ENCODE measurements at regions of chr7 and their contacts with region 1.

Region 1: GRCh38 chr7:76047811-76048667 is at the starts of genes MDH2 and STYXL1:
- DNase-seq: peak; percentile 99
- H3K4me3 ChIP-seq: peak within 1 kb of the TSS; percentile 73 to 97
- H3K27ac ChIP-seq: peak within 1 kb of the TSS; percentile 81 to 86
- H3K4me1 ChIP-seq: peaks cover 0 to 9% of the 10 kb centered on the region in 2 experiments; a peak in 2 of 4 replicates
- H3K27me3 ChIP-seq: no peaks in the 10 kb centered on the region
- CTCF ChIP-seq: no peak
- EP300 ChIP-seq: no peak
- RAD21 ChIP-seq: no peak
- polyA plus RNA-seq, gene MDH2: 244 and 301 TPM in 2 replicates
- polyA plus RNA-seq, gene STYXL1: 86.6 and 89.4 TPM in 2 replicates

Region 2: DNA sequence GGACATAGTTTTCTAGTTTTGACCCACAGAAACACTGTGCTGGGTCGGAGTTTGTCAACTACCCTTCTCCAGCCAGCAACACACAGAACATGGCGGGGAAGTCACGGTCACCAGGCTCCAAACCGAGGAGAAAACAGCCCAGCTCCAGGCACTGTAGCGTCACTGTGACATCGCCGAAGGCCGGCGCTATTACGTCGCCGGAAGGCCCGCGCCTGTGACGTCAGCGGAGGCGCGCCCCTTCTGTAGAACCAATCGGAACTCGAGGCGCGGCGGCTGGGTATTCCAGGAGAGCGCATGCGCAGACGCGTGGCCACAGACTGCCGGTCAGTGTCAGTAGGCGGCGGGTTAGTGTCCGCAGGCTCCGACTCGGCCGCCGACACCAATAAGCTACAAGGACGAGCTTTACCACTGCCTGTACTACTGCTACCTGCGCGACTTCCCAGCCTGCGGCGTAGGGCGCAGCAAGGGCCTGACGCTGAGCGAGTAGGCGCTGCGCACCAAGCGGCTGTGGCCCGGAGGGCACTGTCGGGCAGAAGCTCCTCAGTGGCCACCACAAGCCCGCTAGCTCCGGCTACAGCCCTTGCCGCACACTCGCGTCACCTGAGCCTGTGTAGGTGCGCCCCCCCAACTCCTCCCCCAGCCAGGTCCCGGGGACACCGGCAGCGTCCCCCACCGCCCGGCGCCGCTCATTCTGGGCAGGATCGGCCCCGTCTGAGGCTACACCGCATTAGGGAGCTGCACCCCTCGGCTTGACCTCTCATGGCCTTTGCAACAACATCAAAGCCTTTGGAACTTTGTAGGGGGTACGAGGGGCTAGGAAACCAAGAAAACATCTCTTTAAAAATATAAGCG is 118.6 kb after region 1 on chr7:
- CTCF ChIA-PET with region 1: no interaction called
- POLR2A ChIA-PET with region 1: interaction called, 13 read pairs
- DNase-seq: peak; percentile 99
- H3K4me3 ChIP-seq: peak overlapping the region; percentile 65 to 69
- H3K27ac ChIP-seq: peak overlapping the region; percentile 59 to 70; a peak in 3 of 4 replicates
- H3K4me1 ChIP-seq: peaks cover 0 to 3% of the 10 kb centered on the region in 2 experiments; a peak in 1 of 4 replicates
- H3K27me3 ChIP-seq: no peaks in the 10 kb centered on the region
- CTCF ChIP-seq: peak; percentile 28; the same call in 1 of the 2 replicates
- EP300 ChIP-seq: no peak
- RAD21 ChIP-seq: peak; percentile 27

Measured in SK-N-SH (cell line).